MCF 10A (cell line): ENCODE measurements at regions of chrX and their contacts with region 1.

Region 1: GRCh38 chrX:77785486-77786364 is at the start of gene ATRX:
- DNase-seq: peak; percentile 77
- H3K4me3 Mint-ChIP-seq: peak within 1 kb of the TSS; percentile 99
- H3K27ac Mint-ChIP-seq: peak within 1 kb of the TSS; percentile 100
- H3K4me1 Mint-ChIP-seq: no peaks in the 10 kb centered on the region
- H3K27me3 Mint-ChIP-seq: no peaks in the 10 kb centered on the region
- CTCF ChIP-seq: no peak
- total RNA-seq, gene ATRX: 57.3 and 70.2 TPM in 2 replicates

Region 2: DNA sequence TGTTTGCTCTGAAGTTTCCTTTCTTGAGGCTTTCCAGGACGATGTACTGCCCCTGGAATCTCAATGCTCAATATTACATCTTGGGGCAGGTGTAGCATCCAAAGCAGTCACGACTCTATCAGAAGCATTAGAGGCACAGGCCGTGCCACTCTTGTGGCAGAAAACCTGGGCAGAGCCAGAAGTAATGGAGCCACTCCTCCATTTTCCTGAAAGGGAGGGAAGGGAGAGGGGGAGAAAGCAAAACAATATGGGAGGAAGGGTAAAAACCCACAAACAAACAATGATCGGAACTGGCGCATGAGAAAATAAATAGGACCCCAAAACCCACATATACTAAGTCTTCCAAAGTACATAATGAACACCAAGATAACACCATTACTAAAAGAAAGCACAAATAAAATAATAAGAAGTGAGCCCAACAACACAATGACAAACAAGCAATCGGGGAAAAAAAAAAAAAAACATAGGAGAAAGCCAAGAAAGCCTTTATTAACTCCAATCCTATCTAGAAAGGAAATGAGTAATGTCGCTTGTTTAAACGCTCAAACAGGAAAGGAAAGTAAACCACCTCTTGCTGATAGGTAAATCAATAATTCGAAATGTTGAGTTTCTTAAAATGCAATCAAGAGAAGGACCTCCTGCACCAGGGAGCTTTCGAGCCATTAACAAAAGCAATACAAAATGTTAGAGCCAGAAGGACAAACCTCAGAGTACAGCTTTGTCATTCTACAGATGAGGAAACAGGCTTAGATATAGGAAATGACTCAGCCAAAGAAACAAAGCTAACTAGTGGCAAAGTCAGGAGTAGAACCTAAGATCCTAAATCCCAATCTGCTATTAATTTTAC is 117.1 kb before region 1 on chrX:
- CTCF ChIA-PET with region 1: no interaction called
- POLR2A ChIA-PET with region 1: no interaction called
- intact Hi-C with region 1: loop called (anchors 10 kb)
- DNase-seq: peak; percentile 57
- H3K4me3 Mint-ChIP-seq: no peak overlapping the region
- H3K27ac Mint-ChIP-seq: peak overlapping the region; percentile 87
- H3K4me1 Mint-ChIP-seq: no peaks in the 10 kb centered on the region
- H3K27me3 Mint-ChIP-seq: no peaks in the 10 kb centered on the region
- CTCF ChIP-seq: no peak